Activated naive CD4-positive, alpha-beta T cell treated with anti-CD3 and anti-CD28 coated beads for 36 hours (primary cell): ENCODE measurements at regions of chr6 and their contacts with region 1.

Region 1: GRCh38 chr6:159174263-159174969 is 5.2 kb downstream of the FNDC1 start:
- DNase-seq: peak; percentile 81
- H3K4me3 Mint-ChIP-seq: no peak overlapping the region
- H3K27ac Mint-ChIP-seq: no peak overlapping the region
- H3K4me1 Mint-ChIP-seq: peaks cover 16% of the 10 kb centered on the region
- H3K27me3 Mint-ChIP-seq: peaks cover 49% of the 10 kb centered on the region

Region 2: DNA sequence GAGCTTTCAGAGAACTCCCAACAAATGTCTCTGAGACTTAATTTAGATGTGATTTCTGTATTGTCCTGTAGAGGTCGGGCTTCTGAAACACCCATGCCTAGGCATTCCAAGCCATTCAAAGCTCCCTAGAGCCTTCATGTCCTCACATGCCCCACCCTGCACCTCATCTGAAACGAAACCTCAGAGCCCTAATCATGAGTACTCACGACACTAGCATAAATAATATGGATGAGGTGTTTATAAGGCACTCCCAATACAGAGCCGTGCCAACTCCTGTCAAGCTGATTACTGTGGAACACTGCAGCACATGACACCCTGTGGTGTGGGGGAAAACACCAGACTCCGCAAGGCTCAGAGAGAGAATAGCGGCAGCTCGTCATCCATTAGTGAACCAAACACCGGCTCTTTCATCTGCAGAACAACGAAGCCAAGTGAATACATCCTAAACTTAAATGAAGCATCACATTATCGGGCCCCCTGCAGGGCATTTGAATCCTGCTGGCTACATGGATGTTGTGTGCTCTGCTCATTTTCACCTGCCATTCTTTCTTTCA is 78.6 kb after region 1 on chr6:
- CTCF ChIA-PET with region 1: interaction called, 10 read pairs
- intact Hi-C with region 1: loop called (anchors 5 kb)
- DNase-seq: peak; percentile 22
- H3K4me3 Mint-ChIP-seq: no peak overlapping the region
- H3K27ac Mint-ChIP-seq: no peak overlapping the region
- H3K4me1 Mint-ChIP-seq: no peaks in the 10 kb centered on the region
- H3K27me3 Mint-ChIP-seq: peaks cover 12% of the 10 kb centered on the region

Region 3: GRCh38 chr6:159463119-159463829 is 288.9 kb after region 1 on chr6:
- CTCF ChIA-PET with region 1: no interaction called
- intact Hi-C with region 1: loop called (anchors 1 kb)
- DNase-seq: no peak
- H3K4me3 Mint-ChIP-seq: no peak overlapping the region
- H3K27ac Mint-ChIP-seq: no peak overlapping the region
- H3K4me1 Mint-ChIP-seq: peaks cover 2% of the 10 kb centered on the region
- H3K27me3 Mint-ChIP-seq: peaks cover 14% of the 10 kb centered on the region

Region 4: DNA sequence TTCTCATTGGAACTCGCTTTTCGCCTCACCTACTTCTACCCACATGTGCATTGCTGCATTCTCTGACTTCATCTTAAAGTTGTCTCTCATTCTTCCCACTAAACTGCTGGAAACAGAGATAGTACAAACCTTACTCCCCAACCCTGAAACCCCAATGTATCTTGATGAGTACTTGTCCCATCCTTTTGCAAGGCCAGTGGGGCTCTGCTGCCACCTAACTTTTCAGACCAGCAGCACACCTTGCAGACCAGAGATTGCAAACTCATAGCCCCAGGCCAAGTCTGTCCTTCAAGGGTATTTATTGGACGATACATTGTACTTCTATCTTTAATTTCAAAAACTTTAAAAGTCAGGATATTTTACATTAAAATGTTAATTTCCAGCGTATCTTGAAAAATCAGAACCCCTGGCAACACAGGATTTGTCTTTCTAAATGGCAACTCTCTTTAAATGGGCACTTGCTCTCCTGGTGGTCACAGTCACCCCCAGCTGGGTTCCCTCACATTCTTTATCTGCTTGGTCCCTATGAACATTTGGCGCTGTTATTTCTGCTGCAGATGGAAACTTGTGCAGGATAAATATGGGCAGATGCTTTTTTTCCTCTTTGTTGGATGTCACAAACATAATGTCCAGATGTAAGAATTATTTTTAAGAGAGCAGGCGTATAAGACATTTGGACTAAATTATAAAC is 434.7 kb after region 1 on chr6:
- CTCF ChIA-PET with region 1: no interaction called
- intact Hi-C with region 1: loop called (anchors 2 kb)
- DNase-seq: peak; percentile 51
- H3K4me3 Mint-ChIP-seq: no peak overlapping the region
- H3K27ac Mint-ChIP-seq: no peak overlapping the region
- H3K4me1 Mint-ChIP-seq: no peaks in the 10 kb centered on the region
- H3K27me3 Mint-ChIP-seq: no peaks in the 10 kb centered on the region

Region 5: GRCh38 chr6:159654483-159655098 is 480.2 kb after region 1 on chr6:
- CTCF ChIA-PET with region 1: interaction called, 35 read pairs
- intact Hi-C with region 1: loop called (anchors 1 kb)
- DNase-seq: no peak
- H3K4me3 Mint-ChIP-seq: no peak overlapping the region
- H3K27ac Mint-ChIP-seq: no peak overlapping the region
- H3K4me1 Mint-ChIP-seq: no peaks in the 10 kb centered on the region
- H3K27me3 Mint-ChIP-seq: no peaks in the 10 kb centered on the region

Region 6: GRCh38 chr6:159941286-159942113 is 767.1 kb after region 1 on chr6:
- CTCF ChIA-PET with region 1: no interaction called
- intact Hi-C with region 1: loop called (anchors 1 kb)
- DNase-seq: peak; percentile 55
- H3K4me3 Mint-ChIP-seq: no peak overlapping the region
- H3K27ac Mint-ChIP-seq: no peak overlapping the region
- H3K4me1 Mint-ChIP-seq: peaks cover 5% of the 10 kb centered on the region
- H3K27me3 Mint-ChIP-seq: peaks cover under 1% of the 10 kb centered on the region